ENCODE measurements at regions of chr16 and their contacts with region 1.

Region 1: GRCh38 chr16:28846080-28846932 is at the start of gene TUFM:
- DNase-seq: peak; percentile 97
- H3K4me3 Mint-ChIP-seq: peak within 1 kb of the TSS; percentile 96
- H3K27ac Mint-ChIP-seq: peak within 1 kb of the TSS; percentile 94
- H3K4me1 Mint-ChIP-seq: peaks cover 12% of the 10 kb centered on the region
- H3K27me3 Mint-ChIP-seq: no peaks in the 10 kb centered on the region
- total RNA-seq, gene TUFM: 261 and 264 TPM in 2 replicates

Region 2: GRCh38 chr16:28823872-28824716 is 22.2 kb before region 1 on chr16:
- intact Hi-C with region 1: loop called (anchors 1 kb)
- DNase-seq: peak; percentile 93
- H3K4me3 Mint-ChIP-seq: peak overlapping the region; percentile 98
- H3K27ac Mint-ChIP-seq: peak overlapping the region; percentile 100
- H3K4me1 Mint-ChIP-seq: peaks cover 52% of the 10 kb centered on the region
- H3K27me3 Mint-ChIP-seq: peaks cover 4% of the 10 kb centered on the region

Region 3: GRCh38 chr16:28879841-28880588 is 33.7 kb after region 1 on chr16:
- intact Hi-C with region 1: loop called (anchors 1 kb)
- DNase-seq: peak; percentile 80
- H3K4me3 Mint-ChIP-seq: peak overlapping the region; percentile 91
- H3K27ac Mint-ChIP-seq: peak overlapping the region; percentile 70
- H3K4me1 Mint-ChIP-seq: peaks cover 18% of the 10 kb centered on the region
- H3K27me3 Mint-ChIP-seq: peaks cover 2% of the 10 kb centered on the region

Region 4: DNA sequence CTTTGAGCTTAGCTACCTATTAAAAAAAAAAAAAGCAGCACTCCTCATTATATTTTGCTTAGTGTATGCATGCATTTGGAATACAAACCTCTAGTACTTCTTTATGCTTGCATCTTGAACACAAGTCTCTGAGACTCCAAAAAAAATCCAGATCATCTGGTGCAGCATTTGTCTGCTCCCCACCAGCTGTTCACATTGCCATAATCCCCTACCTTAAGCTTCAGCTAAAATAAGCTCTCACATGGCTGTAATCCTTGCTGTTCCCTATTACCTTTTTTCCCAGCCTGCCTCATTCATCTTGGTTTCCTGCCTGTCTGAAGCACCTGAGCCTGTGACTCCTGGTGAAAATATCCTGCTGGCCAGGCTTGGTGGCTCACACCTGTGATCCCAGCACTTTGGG is 97.0 kb after region 1 on chr16:
- intact Hi-C with region 1: loop called (anchors 1 kb)
- DNase-seq: no peak
- H3K4me3 Mint-ChIP-seq: no peak overlapping the region
- H3K27ac Mint-ChIP-seq: no peak overlapping the region
- H3K4me1 Mint-ChIP-seq: peaks cover 18% of the 10 kb centered on the region
- H3K27me3 Mint-ChIP-seq: no peaks in the 10 kb centered on the region

Region 5: DNA sequence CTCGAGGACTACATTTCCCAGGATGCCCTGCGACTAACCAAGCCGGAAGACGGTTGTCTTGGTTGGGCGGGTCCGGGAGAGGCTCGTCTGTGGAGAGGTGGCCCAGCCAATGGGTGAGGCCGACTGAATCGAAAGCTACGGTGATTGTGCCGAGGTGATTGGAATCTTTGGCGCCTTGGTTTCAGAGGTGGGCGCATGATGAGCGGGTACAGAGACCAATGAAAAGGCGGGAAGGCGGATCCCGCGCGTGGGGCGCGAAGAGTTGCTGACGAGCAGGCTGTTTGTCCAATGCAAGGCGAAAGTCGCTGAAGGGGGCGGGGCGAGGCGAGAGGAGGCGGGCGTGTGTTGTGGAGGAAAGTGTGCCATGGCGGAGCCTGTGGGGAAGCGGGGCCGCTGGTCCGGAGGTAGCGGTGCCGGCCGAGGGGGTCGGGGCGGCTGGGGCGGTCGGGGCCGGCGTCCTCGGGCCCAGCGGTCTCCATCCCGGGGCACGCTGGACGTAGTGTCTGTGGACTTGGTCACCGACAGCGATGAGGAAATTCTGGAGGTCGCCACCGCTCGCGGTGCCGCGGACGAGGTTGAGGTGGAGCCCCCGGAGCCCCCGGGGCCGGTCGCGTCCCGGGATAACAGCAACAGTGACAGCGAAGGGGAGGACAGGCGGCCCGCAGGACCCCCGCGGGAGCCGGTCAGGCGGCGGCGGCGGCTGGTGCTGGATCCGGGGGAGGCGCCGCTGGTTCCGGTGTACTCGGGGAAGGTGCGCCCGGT is 104.5 kb after region 1 on chr16 and contains the start of gene NFATC2IP:
- intact Hi-C with region 1: loop called (anchors 1 kb)
- DNase-seq: peak; percentile 99
- H3K4me3 Mint-ChIP-seq: peak within 1 kb of the TSS; percentile 95
- H3K27ac Mint-ChIP-seq: peak within 1 kb of the TSS; percentile 95
- H3K4me1 Mint-ChIP-seq: peaks cover 33% of the 10 kb centered on the region
- H3K27me3 Mint-ChIP-seq: no peaks in the 10 kb centered on the region
- total RNA-seq, gene NFATC2IP: 110 and 111 TPM in 2 replicates